ENCODE measurements at regions of chr1 and their contacts with region 1.

Region 1: DNA sequence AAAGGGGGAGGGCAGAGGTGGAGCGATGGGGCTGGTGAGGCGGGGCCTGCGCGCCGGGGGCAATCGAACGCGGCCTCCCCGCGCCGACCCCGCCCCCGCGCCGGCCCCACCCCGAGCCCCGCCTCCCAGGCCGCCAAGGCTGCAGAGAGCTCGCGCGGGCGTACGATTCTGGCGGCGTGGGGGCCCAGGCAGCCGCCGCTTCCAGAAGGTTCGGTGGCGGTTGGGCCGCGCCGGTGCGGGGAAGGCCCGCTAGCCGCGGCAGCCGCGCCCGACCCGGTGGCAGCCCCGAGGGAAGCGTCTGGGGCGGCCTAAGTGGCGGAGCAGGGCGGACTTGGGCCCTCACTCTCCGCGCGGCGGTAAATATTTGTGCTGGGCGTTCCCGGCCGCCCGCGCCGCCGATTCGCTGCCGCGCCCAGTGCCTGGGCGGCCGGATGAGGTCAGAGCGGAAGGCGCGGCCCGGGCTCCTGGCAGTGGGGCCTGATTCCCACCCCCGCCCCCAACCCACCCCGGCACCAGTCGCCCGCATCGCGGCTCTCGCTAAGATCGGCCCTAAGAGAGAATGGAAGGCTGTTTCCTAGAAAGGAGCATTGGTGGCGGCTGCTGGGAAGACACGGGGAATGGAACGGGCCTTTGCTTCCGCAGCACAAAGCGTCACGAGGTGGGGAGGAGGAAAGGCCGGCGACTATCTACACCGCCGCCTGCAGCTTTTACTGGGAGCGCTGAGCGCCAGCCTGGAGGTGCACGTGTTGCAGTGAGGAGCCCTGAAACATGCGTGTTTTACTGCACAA is at the start of gene ACOT7:
- DNase-seq: peak; percentile 73 to 76 (median 75)
- H3K4me3 ChIP-seq: peak within 1 kb of the TSS; percentile 44 to 77 (median 50)
- H3K4me3 Mint-ChIP-seq: peak within 1 kb of the TSS; percentile 81 to 90
- H3K27ac ChIP-seq: peak within 1 kb of the TSS; percentile 84 to 90
- H3K27ac Mint-ChIP-seq: peak within 1 kb of the TSS; percentile 92 to 95 (median 94)
- H3K4me1 ChIP-seq: peaks cover 18 to 24% of the 10 kb centered on the region in 2 donors
- H3K4me1 Mint-ChIP-seq: peaks cover 25% of the 10 kb centered on the region
- H3K27me3 ChIP-seq: peaks cover 0 to 9% of the 10 kb centered on the region in 2 donors
- H3K27me3 Mint-ChIP-seq: peaks cover 10 to 20% (median 17%) of the 10 kb centered on the region in 3 donors
- CTCF ChIP-seq: no peak
- polyA plus RNA-seq, gene ACOT7: 0.63 to 4.3 (median 1.4) TPM

Region 2: DNA sequence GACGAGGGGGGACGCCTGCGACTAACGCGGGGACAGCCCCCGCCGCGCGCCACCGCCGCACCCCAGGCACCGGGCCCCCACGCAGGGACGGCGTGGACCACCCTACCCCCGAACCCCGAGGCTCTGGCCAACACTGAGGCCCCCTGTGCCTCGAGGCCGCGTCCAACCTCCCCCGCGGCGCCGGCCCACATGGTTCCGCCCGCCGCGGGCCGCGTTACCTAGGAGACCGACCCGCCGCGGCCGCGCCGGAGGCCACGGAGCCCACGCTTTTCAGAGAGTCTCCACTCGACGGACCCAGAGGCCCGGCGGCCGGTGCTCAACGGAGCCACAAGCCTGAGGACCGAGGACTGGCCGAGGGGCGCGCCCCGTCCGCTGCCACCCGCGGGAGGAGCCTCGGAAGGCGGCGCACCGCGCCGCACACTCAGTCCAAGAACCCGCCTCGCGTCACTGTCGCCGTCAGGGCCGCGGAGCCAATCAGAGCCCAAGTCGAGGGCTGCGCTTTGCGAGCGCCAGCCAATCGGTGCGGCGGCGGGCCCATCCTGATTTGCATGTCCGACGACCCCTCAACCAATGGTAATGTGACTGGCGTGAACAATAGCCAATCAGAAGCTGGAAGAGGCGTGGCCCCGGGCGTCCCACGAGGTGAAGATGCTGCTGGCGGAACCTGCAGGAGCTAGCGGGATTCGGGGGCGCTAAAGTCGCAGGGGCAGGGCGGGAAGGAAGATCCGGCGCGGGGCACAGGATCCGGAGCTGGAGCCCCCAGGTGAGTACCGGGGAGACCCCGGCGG is 401.4 kb before region 1 on chr1 and contains the start of gene NPHP4:
- intact Hi-C with region 1: loop called in 1 of 2 experiments (anchors 10 kb)
- DNase-seq: peak; percentile 98 to 99 (median 99)
- H3K4me3 ChIP-seq: peak within 1 kb of the TSS; percentile 54 to 83 (median 57)
- H3K4me3 Mint-ChIP-seq: peak within 1 kb of the TSS; percentile 85 to 92
- H3K27ac ChIP-seq: peak within 1 kb of the TSS; percentile 58 to 92
- H3K27ac Mint-ChIP-seq: peak within 1 kb of the TSS; percentile 62 to 93 (median 90)
- H3K4me1 ChIP-seq: peaks cover 32 to 37% of the 10 kb centered on the region in 2 donors
- H3K4me1 Mint-ChIP-seq: peaks cover 34% of the 10 kb centered on the region
- H3K27me3 ChIP-seq: no peaks in the 10 kb centered on the region
- H3K27me3 Mint-ChIP-seq: peaks cover 0 to 1% (median 1%) of the 10 kb centered on the region in 3 donors
- CTCF ChIP-seq: no peak
- polyA plus RNA-seq, gene NPHP4: 0.39 to 13.7 (median 1.2) TPM

Region 3: DNA sequence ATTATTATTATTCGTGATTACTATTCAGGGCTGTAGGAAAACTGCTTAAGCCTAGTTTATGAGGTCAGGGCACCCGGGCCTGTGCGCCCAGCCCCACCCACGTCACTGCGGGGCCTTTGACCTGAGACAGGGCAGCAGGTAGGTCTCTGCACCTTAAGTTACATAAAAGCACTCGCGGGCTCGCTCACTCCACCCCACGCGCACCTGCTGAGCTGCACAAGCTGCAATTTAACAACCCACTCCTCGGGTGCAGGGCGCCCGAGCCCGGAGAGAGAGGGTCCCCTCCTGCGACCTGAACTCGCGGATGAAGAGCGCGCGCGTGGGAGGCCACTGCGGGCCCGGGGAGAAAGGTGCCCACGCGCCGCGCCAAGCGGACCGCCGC is 158.3 kb before region 1 on chr1:
- intact Hi-C with region 1: loop called in 1 of 2 experiments (anchors 5 kb)
- DNase-seq: no peak
- H3K4me3 ChIP-seq: peak overlapping the region; percentile 57 to 81 (median 64)
- H3K4me3 Mint-ChIP-seq: peak overlapping the region; percentile 85 to 92
- H3K27ac ChIP-seq: no peak overlapping the region
- H3K27ac Mint-ChIP-seq: peak overlapping the region in 1 of 7 donors; percentile 40
- H3K4me1 ChIP-seq: peaks cover 13% of the 10 kb centered on the region in 2 donors
- H3K4me1 Mint-ChIP-seq: peaks cover 12% of the 10 kb centered on the region
- H3K27me3 ChIP-seq: peaks cover 12 to 19% of the 10 kb centered on the region in 2 donors
- H3K27me3 Mint-ChIP-seq: peaks cover 27 to 31% (median 29%) of the 10 kb centered on the region in 3 donors
- CTCF ChIP-seq: no peak

Region 4: GRCh38 chr1:6554031-6554906 is 160.7 kb after region 1 on chr1 and contains the start of gene NOL9:
- intact Hi-C with region 1: loop called in 1 of 2 experiments (anchors 10 kb)
- DNase-seq: peak; percentile 91 to 93 (median 91)
- H3K4me3 ChIP-seq: peak within 1 kb of the TSS; percentile 76 to 94 (median 87)
- H3K4me3 Mint-ChIP-seq: peak within 1 kb of the TSS; percentile 73 to 88
- H3K27ac ChIP-seq: peak within 1 kb of the TSS in 1 of 2 donors; percentile 83
- H3K27ac Mint-ChIP-seq: peak within 1 kb of the TSS; percentile 35 to 82 (median 43)
- H3K4me1 ChIP-seq: peaks cover 14 to 22% of the 10 kb centered on the region in 2 donors
- H3K4me1 Mint-ChIP-seq: peaks cover 11% of the 10 kb centered on the region
- H3K27me3 ChIP-seq: no peaks in the 10 kb centered on the region
- H3K27me3 Mint-ChIP-seq: peaks cover 0 to 1% (median 0%) of the 10 kb centered on the region in 3 donors
- CTCF ChIP-seq: peak; percentile 95
- polyA plus RNA-seq, gene NOL9: 3.7 to 11.5 (median 7.6) TPM

Measured in CD14-positive monocyte (primary cell).